ENCODE measurements at regions of chr3 and their contacts with region 1.

Region 1: DNA sequence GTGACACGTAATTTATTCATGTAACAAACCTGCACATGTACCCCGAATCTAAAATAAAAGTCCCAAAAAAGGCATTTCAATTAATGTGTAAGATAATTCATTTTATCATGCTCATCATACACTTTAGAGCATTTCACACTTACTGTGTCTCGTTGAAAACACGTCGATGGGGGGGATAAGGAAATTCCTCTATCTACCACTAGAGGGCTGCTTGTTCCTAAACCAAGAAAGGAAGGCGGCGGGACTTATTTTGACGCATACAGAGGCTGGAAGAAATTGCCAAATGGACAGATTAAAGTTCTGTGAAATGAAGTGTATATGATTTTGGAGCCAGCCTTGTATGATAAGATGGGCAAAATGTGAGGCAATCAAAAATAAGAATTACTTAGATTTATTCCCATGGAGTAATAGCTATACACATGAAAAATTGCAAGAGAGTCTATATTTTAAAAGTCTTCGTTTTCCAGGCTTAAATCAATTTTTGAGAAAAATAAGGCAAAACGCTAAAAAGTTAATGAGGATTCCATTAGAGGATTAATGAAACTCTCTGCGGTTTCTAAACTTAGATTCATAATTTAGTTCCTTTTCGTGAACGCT is 346.8 kb downstream of the CNTN3 start:
- DNase-seq: no peak
- ATAC-seq: peak; percentile 46

Region 2: DNA sequence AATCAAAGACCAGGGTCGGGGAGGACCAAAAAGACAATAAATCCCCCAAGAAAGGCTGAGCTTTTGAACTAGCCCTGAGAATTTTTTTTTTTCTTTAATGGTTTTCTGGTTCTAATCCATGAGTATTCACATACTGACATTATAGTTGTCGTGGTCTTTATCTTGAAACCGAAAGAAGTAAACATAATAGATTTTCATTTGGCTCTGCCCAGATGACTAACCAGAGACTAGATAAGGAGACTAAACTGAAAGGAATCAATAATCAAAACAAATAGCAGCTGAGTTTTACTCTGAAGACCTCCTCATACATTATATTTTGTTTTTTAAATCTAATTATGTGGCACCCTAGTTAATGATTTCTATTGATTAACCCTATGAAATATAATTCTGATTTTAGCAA is 34.6 kb before region 1 on chr3:
- intact Hi-C with region 1: no loop called
- DNase-seq: no peak
- ATAC-seq: no peak

Region 3: DNA sequence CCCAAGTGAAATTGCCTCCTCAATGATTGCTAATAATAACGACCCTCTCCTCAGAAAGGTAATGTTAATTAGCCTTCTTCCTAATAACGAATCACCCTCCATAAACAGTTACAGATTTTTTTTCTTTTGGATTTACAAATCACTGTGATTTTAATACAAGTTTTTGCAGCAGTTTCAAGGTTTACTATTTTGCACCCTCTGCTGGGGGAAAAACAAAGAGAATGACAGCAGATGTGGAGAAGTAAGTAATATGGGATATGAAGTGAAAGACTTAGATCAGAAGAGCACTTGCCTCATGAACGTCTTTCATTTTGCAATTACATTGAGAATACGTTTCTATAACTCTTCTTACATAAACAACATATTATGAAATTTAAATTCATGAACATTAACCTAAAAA is 362.9 kb after region 1 on chr3:
- intact Hi-C with region 1: loop called (anchors 5 kb)
- DNase-seq: no peak
- ATAC-seq: no peak

Region 4: DNA sequence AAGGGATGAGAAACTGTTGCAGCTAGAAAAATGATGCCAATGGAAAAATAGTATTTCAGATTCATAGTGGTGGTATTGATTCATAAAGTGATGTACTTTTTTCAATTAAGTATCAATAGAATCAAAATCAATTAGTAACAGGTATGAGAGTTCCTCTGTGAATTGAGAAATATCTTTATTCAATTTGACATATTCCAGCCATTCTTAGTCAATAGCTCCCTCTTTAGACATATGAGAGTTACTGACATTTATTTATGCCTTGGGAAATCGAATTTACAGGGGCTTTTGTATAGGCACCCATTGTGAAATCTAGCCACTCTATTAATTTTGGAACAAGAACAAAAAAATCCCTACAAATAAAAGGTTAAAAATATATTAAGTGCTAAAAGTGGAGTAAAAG is 733.6 kb after region 1 on chr3:
- intact Hi-C with region 1: loop called (anchors 5 kb)
- DNase-seq: no peak
- ATAC-seq: no peak

Region 5: GRCh38 chr3:75171630-75172230 is 904.0 kb after region 1 on chr3:
- intact Hi-C with region 1: loop called (anchors 5 kb)
- DNase-seq: no peak
- ATAC-seq: no peak